B cell (primary cell): ENCODE measurements at regions of chr15 and their contacts with region 1.

Region 1: DNA sequence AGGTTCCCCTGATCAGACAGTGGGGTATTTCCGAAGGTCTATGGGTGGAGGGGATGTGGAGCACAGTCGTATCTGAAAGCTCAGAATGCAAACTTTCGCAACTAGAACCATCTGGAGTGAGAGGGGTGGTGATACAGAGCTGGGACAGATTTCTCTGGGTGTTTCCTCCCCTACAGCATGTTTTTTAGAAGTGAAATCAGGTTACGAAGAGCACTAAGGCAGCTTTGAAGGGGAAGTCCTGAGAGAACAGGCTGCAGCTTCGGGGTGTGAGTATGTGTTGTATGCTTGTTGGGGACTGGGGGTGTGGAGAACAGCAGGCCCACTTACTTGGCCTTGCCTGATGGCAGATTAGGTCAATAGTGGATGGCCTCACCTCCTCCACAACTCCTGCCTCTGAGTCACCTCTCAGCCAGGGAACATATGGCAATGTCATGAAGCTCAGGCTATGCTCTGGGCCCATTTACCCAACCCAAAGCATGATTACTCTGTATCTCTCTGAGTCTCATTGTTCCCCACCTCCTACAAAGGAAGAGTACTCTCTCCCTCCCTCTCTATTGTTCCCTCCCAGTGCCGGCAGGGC is 107.2 kb upstream of the RASGRP1 start:
- DNase-seq: peak; percentile 91
- ATAC-seq: peak; percentile 54
- H3K4me3 ChIP-seq: no peak overlapping the region
- H3K4me3 Mint-ChIP-seq: peak overlapping the region; percentile 59
- H3K27ac ChIP-seq: peak overlapping the region; percentile 87 to 98
- H3K27ac Mint-ChIP-seq: peak overlapping the region; percentile 91
- H3K4me1 ChIP-seq: peaks cover 54 to 58% of the 10 kb centered on the region in 2 donors
- H3K4me1 Mint-ChIP-seq: peaks cover 64% of the 10 kb centered on the region
- H3K27me3 ChIP-seq: no peaks in the 10 kb centered on the region
- H3K27me3 Mint-ChIP-seq: no peaks in the 10 kb centered on the region
- CTCF ChIP-seq: no peak

Region 2: GRCh38 chr15:38252481-38253412 is 419.0 kb before region 1 on chr15 and contains the start of gene SPRED1:
- CTCF ChIA-PET with region 1: interaction called, 3 read pairs
- POLR2A ChIA-PET with region 1: no interaction called
- intact Hi-C with region 1: loop called (anchors 5 kb)
- DNase-seq: no peak
- ATAC-seq: peak; percentile 9
- H3K4me3 ChIP-seq: peak within 1 kb of the TSS; percentile 57 to 93 (median 79)
- H3K4me3 Mint-ChIP-seq: peak within 1 kb of the TSS; percentile 90
- H3K27ac ChIP-seq: peak within 1 kb of the TSS in 1 of 2 donors; percentile 19
- H3K27ac Mint-ChIP-seq: peak within 1 kb of the TSS; percentile 84
- H3K4me1 ChIP-seq: peaks cover 21 to 28% of the 10 kb centered on the region in 2 donors
- H3K4me1 Mint-ChIP-seq: peaks cover 34% of the 10 kb centered on the region
- H3K27me3 ChIP-seq: peaks cover 0 to 14% (median 4%) of the 10 kb centered on the region in 4 experiments
- H3K27me3 Mint-ChIP-seq: peaks cover 11% of the 10 kb centered on the region
- CTCF ChIP-seq: no peak
- total RNA-seq, gene SPRED1: 1.2 and 2.1 TPM in 2 replicates

Region 3: DNA sequence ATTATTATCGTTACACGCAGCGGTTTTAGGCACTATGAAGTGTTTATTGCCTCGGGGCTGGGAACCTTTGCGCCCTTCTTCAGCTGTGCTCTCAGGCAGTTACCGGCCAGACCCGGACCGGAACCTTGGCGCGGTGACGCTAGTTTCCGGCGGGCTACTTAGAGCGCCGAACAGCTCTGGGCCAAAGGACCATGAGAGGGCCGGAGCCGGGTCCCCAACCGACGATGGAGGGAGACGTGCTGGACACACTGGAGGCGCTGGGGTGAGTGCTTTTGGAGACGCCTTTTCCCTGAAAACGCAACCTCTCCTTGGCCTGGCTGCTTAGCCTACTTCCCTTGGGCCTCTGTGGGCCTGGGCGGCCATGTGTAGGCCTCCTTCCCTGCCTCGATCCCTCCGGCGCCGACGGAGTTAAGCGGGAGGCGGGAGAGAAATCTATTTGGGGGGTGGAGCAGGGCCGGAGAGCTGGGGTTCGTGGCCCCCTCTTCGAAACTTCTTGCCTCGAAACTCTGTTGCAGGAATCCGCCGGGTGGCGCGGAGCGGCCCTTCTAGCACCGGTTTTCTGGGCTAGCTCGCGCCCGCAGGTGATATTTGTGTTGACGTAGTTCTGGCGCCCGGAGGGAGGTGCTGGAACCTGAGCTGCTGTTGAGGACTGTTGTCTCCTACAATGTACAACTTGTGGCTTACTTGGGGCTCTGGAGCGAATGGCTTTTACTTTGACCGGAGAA is 217.6 kb before region 1 on chr15 and contains the start of gene FAM98B:
- CTCF ChIA-PET with region 1: interaction called, 4 read pairs
- POLR2A ChIA-PET with region 1: no interaction called
- intact Hi-C with region 1: loop called (anchors 1 kb)
- DNase-seq: peak; percentile 91
- ATAC-seq: peak; percentile 86
- H3K4me3 ChIP-seq: peak within 1 kb of the TSS; percentile 69 to 94 (median 86)
- H3K4me3 Mint-ChIP-seq: peak within 1 kb of the TSS; percentile 99
- H3K27ac ChIP-seq: peak within 1 kb of the TSS; percentile 87 to 89
- H3K27ac Mint-ChIP-seq: peak within 1 kb of the TSS; percentile 97
- H3K4me1 ChIP-seq: peaks cover 9% of the 10 kb centered on the region in 2 donors
- H3K4me1 Mint-ChIP-seq: peaks cover 27% of the 10 kb centered on the region
- H3K27me3 ChIP-seq: no peaks in the 10 kb centered on the region
- H3K27me3 Mint-ChIP-seq: peaks cover 10% of the 10 kb centered on the region
- CTCF ChIP-seq: peak; percentile 12
- total RNA-seq, gene FAM98B: 16.6 and 21.5 TPM in 2 replicates

Region 4: DNA sequence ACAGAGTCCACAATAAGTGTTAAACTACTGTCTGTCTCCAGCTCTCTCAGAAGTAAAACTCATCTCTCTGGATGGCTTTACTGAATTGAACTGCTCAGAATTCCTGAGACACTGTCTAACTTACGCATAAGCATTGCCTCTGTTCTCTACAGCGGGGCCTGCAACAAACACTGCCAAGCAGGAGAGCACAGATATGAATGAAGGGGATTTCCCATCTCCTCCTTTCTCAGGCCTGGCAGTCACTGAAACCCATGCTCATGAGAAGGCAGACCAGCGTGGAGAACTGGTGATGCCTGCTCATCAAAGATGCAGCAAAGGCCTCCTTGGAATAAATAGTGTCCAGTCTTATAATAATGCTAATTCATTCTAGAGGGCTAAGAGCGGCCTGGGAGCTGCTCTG is 117.4 kb before region 1 on chr15:
- CTCF ChIA-PET with region 1: no interaction called
- POLR2A ChIA-PET with region 1: no interaction called
- intact Hi-C with region 1: no loop called
- DNase-seq: no peak
- ATAC-seq: no peak
- H3K4me3 ChIP-seq: no peak overlapping the region
- H3K4me3 Mint-ChIP-seq: no peak overlapping the region
- H3K27ac ChIP-seq: no peak overlapping the region
- H3K27ac Mint-ChIP-seq: no peak overlapping the region
- H3K4me1 ChIP-seq: peaks cover 35 to 40% of the 10 kb centered on the region in 2 donors
- H3K4me1 Mint-ChIP-seq: peaks cover 60% of the 10 kb centered on the region
- H3K27me3 ChIP-seq: no peaks in the 10 kb centered on the region
- H3K27me3 Mint-ChIP-seq: no peaks in the 10 kb centered on the region
- CTCF ChIP-seq: no peak

Region 5: GRCh38 chr15:38610748-38611147 is 61.0 kb before region 1 on chr15:
- CTCF ChIA-PET with region 1: interaction called, 4 read pairs
- POLR2A ChIA-PET with region 1: no interaction called
- intact Hi-C with region 1: loop called (anchors 5 kb)
- DNase-seq: peak; percentile 72
- ATAC-seq: peak; percentile 95
- H3K4me3 ChIP-seq: peak overlapping the region in 1 of 5 experiments; percentile 7
- H3K4me3 Mint-ChIP-seq: peak overlapping the region; percentile 60
- H3K27ac ChIP-seq: peak overlapping the region; percentile 56 to 58
- H3K27ac Mint-ChIP-seq: peak overlapping the region; percentile 74
- H3K4me1 ChIP-seq: peaks cover 21 to 23% of the 10 kb centered on the region in 2 donors
- H3K4me1 Mint-ChIP-seq: peaks cover 38% of the 10 kb centered on the region
- H3K27me3 ChIP-seq: no peaks in the 10 kb centered on the region
- H3K27me3 Mint-ChIP-seq: no peaks in the 10 kb centered on the region
- CTCF ChIP-seq: no peak

Region 6: GRCh38 chr15:38636597-38636996 is 35.2 kb before region 1 on chr15:
- CTCF ChIA-PET with region 1: no interaction called
- POLR2A ChIA-PET with region 1: interaction called, 9 read pairs
- intact Hi-C with region 1: loop called (anchors 5 kb)
- DNase-seq: no peak
- ATAC-seq: no peak
- H3K4me3 ChIP-seq: no peak overlapping the region
- H3K4me3 Mint-ChIP-seq: no peak overlapping the region
- H3K27ac ChIP-seq: no peak overlapping the region
- H3K27ac Mint-ChIP-seq: no peak overlapping the region
- H3K4me1 ChIP-seq: peaks cover 0 to 7% of the 10 kb centered on the region in 2 donors
- H3K4me1 Mint-ChIP-seq: peaks cover 13% of the 10 kb centered on the region
- H3K27me3 ChIP-seq: no peaks in the 10 kb centered on the region
- H3K27me3 Mint-ChIP-seq: no peaks in the 10 kb centered on the region
- CTCF ChIP-seq: no peak

Region 7: GRCh38 chr15:38647683-38648082 is 24.1 kb before region 1 on chr15:
- CTCF ChIA-PET with region 1: interaction called, 44 read pairs
- POLR2A ChIA-PET with region 1: interaction called, 11 read pairs
- intact Hi-C with region 1: loop called (anchors 1 kb)
- DNase-seq: no peak
- ATAC-seq: no peak
- H3K4me3 ChIP-seq: no peak overlapping the region
- H3K4me3 Mint-ChIP-seq: no peak overlapping the region
- H3K27ac ChIP-seq: no peak overlapping the region
- H3K27ac Mint-ChIP-seq: no peak overlapping the region
- H3K4me1 ChIP-seq: peaks cover 39 to 40% of the 10 kb centered on the region in 2 donors
- H3K4me1 Mint-ChIP-seq: peaks cover 60% of the 10 kb centered on the region
- H3K27me3 ChIP-seq: no peaks in the 10 kb centered on the region
- H3K27me3 Mint-ChIP-seq: no peaks in the 10 kb centered on the region
- CTCF ChIP-seq: no peak

Region 8: DNA sequence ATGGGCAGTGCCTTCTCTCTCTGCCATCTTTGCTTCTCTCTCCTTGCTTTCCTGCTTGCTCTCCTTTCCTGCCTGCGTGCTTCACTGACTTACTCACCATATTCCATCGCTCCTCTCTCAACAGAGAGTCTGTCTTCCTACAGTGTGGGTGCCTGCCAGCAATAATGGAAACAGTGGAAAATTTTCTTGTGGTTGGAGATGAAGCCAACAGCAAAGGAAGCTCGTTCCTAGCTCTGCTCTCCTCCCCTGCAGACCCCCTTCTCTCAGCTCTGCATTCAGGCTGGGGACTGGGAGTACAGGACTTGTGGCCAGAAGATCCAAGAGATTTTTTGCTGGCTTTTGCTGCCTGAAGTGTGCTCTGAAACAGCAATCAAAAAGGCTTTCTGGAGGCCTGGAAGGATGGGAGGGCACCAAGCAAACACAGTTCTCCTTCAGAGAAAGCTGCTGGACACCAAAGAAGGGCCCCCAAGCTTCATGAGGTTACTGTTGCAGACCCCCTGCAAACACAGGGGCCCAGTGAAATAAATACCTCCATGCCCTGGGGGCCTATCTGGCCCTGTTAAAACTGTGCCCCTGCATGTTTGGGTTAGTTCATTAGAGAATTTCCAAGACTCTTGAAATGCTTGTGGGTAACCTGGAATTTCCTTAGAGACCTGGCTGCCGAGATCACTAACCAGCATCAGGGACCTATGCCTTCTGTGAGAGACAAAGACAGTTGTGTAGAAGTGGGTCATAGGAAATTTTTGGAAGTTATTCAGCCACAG is 42.7 kb after region 1 on chr15:
- CTCF ChIA-PET with region 1: no interaction called
- POLR2A ChIA-PET with region 1: no interaction called
- intact Hi-C with region 1: no loop called
- DNase-seq: no peak
- ATAC-seq: no peak
- H3K4me3 ChIP-seq: no peak overlapping the region
- H3K4me3 Mint-ChIP-seq: no peak overlapping the region
- H3K27ac ChIP-seq: no peak overlapping the region
- H3K27ac Mint-ChIP-seq: no peak overlapping the region
- H3K4me1 ChIP-seq: no peaks in the 10 kb centered on the region
- H3K4me1 Mint-ChIP-seq: no peaks in the 10 kb centered on the region
- H3K27me3 ChIP-seq: peaks cover 0 to 3% (median 0%) of the 10 kb centered on the region in 4 experiments
- H3K27me3 Mint-ChIP-seq: peaks cover 26% of the 10 kb centered on the region
- CTCF ChIP-seq: no peak